Gastrocnemius medialis (tissue), 4 donors: ENCODE measurements at regions of chr2 and their contacts with region 1.

Region 1: DNA sequence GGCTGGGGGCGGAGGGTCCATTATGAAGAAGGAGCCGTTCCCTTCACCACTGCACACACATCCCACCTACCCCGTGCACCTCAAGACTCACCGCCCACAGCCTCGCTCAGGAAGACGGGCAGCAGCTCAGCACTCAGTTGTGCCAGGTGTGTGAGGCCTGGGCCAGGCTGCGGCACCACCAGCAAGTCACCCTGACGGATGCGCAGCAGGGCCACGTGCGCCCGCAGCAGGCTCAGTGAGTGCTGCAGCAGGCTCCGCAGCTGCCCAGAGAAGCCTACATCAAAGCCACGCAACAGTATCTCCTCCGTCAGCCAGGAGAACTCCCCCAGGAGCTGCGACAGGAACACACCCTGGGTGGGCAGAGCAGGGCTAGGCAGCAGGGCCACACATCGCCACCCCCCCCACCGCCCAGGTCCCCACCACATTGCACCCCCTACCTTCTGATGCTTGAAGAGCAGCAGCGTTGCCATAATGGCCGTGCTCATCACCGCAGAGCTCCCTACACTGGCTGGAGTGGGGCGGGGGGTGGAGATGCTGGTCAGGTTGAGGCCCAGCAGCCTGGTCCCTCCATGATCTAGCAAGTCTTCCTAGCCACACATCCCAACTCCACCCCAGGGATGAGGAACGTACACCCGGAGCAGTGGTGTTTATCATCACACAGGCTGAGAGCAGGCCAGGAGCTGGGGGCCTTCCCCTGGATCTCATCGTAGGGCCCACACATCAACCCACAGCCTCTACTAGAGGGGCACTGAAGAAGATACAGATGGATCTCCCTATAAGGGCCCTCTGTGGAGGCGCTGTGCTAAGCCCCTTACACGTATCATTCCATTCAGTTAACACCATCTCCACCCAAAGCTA is 10.2 kb downstream of the GPAT2 start:
- DNase-seq: no peak
- ATAC-seq: no peak
- H3K4me3 ChIP-seq: peak overlapping the region in 1 of 4 donors; percentile 28
- H3K27ac ChIP-seq: peak overlapping the region in 1 of 4 donors; percentile 28
- H3K4me1 ChIP-seq: peaks cover 0 to 1% of the 10 kb centered on the region in 2 donors
- H3K27me3 ChIP-seq: no peaks in the 10 kb centered on the region
- CTCF ChIP-seq: no peak
- POLR2A ChIP-seq: no peak

Region 2: DNA sequence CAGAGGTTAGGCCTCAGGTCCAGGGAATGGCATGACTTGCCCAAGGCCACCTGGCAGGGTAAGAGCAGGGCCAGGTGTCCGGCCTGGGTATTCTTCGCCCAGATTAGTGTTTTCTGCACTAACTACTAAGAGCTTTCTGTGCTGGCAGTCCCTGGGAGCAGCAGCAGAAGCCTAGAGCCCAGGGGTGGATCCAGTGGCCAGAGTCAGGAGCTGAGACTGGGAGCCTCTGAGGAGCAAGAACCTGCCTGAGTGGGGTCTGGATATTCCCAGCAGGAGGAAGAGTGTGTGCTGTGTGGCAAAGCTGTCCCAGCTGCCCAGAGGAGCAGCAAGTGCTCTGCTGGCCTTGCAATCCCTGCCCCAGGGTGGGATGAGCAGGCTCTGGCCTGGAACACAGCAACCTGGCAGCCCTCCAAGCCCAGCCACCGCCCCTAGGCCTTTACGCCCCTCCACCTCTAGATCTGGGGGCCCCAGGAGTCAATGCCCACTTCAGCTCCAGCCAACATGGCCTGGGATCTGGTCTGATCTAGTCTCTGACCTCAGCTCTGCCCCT is 40.9 kb after region 1 on chr2:
- in situ Hi-C with region 1: no loop called
- intact Hi-C with region 1: no loop called
- DNase-seq: no peak
- ATAC-seq: no peak
- H3K4me3 ChIP-seq: no peak overlapping the region
- H3K27ac ChIP-seq: no peak overlapping the region
- H3K4me1 ChIP-seq: no peaks in the 10 kb centered on the region
- H3K27me3 ChIP-seq: no peaks in the 10 kb centered on the region
- CTCF ChIP-seq: no peak
- POLR2A ChIP-seq: no peak

Region 3: DNA sequence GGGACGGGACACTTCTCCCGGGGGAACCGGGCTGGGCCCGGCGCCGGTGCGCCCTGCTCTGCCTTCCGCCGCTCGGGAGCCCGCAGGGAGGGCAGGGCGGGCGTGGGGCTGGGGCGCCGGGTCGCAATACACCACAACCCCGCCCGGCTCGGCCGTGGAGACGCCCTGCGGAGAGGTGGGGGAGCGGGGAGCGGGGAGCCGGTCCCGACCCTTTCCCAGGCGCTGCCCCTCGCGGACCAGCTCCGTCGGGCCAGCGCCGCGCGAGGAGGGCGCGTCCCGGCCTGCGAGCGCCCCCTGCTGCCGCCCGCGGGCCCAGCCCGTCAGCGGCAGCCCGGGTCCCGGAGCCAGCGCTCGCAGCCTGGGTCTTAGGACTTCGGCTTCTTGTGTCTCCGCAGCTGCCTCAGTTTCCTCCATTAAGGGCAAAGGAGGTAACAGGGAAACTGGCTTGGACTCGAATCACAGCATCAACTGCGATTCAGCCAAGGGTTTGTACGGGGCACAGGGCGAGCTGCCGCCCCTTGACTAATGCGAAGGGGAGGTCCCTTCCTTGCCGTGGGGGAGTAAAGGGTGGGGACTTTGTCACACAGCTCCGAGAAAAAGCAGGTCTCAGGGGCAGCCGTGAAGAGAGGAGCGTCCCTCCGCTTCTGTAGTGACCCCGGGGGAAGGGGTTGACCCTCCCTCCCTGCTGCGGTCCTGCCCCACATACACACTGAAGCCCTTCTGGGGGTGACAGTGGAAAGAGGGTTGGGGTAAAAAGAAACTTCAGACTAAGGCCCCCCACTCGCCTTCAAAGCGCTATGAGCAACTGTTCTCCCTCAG is 92.5 kb after region 1 on chr2:
- in situ Hi-C with region 1: loop called in 2 of 4 experiments (anchors 25 kb)
- intact Hi-C with region 1: no loop called
- DNase-seq: no peak
- ATAC-seq: peak; percentile 80 to 83
- H3K4me3 ChIP-seq: peak overlapping the region; percentile 30 to 66 (median 61)
- H3K27ac ChIP-seq: peak overlapping the region in 3 of 4 donors; percentile 66 to 72 (median 69)
- H3K4me1 ChIP-seq: peaks cover 4 to 5% of the 10 kb centered on the region in 2 donors
- H3K27me3 ChIP-seq: peaks cover 12 to 20% (median 18%) of the 10 kb centered on the region in 3 donors
- CTCF ChIP-seq: peak; percentile 69 to 95 (median 89)
- POLR2A ChIP-seq: no peak

Region 4: DNA sequence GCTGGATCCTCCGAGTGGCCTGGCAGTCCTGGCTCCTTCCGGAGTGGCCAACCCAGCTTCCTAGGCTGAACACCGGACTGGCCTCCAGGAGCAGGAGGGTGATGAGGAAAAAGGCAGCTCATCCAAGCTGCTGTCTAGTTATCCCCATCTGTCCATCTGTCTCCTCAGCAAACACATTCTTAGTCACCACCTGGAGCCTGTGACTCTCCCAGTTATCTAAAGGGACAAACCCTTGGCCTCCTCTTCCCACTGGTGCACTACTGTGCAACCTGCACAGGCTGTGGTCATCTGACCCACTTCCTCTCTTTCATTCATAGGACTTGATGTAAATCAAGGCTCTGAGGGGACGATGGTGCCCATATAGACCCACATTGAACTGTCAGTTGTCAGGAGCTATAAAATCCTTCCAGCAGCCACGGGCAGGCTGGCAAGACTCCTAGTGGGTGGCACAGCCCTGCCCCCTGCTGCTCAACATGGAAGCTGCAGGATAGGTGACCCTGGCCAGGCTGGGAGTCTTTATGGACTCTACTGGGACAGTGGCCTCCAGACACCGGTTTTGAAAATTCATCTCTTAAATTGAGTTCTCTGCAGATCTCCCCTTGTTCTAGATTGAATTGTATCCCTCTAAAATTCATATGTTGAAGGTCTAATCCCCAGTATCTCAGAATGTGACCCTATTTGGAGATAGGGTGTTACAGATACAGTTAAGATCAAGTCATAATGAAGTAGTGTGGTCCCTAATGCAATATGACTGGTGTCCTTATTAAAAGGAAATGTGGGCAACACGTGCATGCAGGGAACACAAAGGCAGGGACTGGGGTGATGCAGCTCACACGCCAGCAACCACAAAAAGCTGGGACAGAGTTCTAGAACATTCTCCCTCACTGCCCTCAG is 149.9 kb after region 1 on chr2:
- in situ Hi-C with region 1: loop called in 1 of 4 experiments (anchors 10 kb)
- intact Hi-C with region 1: loop called (anchors 10 kb)
- DNase-seq: peak; percentile 53 to 71
- ATAC-seq: peak; percentile 70 to 75
- H3K4me3 ChIP-seq: no peak overlapping the region
- H3K27ac ChIP-seq: peak overlapping the region in 2 of 4 donors; percentile 2 to 25
- H3K4me1 ChIP-seq: peaks cover 0 to 12% of the 10 kb centered on the region in 2 donors
- H3K27me3 ChIP-seq: no peaks in the 10 kb centered on the region
- CTCF ChIP-seq: peak; percentile 70 to 92 (median 82)
- POLR2A ChIP-seq: no peak